Activated CD8-positive, alpha-beta T cell treated with anti-CD3 and anti-CD28 coated beads, Interleukin-2, amount 10 ng/mL, durations not matched to agents 7 days and 5 days (primary cell): ENCODE measurements at regions of chr7 and their contacts with region 1.

Region 1: GRCh38 chr7:104883718-104884452 is 130.1 kb upstream of the KMT2E start:
- DNase-seq: peak; percentile 74
- ATAC-seq: peak; percentile 88
- H3K4me3 Mint-ChIP-seq: no peak overlapping the region
- H3K27ac Mint-ChIP-seq: no peak overlapping the region
- H3K4me1 Mint-ChIP-seq: peaks cover 10% of the 10 kb centered on the region
- H3K27me3 Mint-ChIP-seq: peaks cover 6% of the 10 kb centered on the region

Region 2: GRCh38 chr7:104231054-104232046 is 652.5 kb before region 1 on chr7:
- CTCF ChIA-PET with region 1: interaction called, 12 read pairs
- POLR2A ChIA-PET with region 1: no interaction called
- DNase-seq: peak; percentile 62
- ATAC-seq: peak; percentile 82
- H3K4me3 Mint-ChIP-seq: no peak overlapping the region
- H3K27ac Mint-ChIP-seq: no peak overlapping the region
- H3K4me1 Mint-ChIP-seq: no peaks in the 10 kb centered on the region
- H3K27me3 Mint-ChIP-seq: peaks cover 20% of the 10 kb centered on the region

Region 3: GRCh38 chr7:104862719-104863118 is 21.2 kb before region 1 on chr7:
- CTCF ChIA-PET with region 1: interaction called, 22 read pairs
- POLR2A ChIA-PET with region 1: interaction called, 3 read pairs
- DNase-seq: no peak
- ATAC-seq: no peak
- H3K4me3 Mint-ChIP-seq: no peak overlapping the region
- H3K27ac Mint-ChIP-seq: no peak overlapping the region
- H3K4me1 Mint-ChIP-seq: peaks cover 10% of the 10 kb centered on the region
- H3K27me3 Mint-ChIP-seq: peaks cover 10% of the 10 kb centered on the region

Region 4: GRCh38 chr7:104900525-104901239 is 16.8 kb after region 1 on chr7:
- CTCF ChIA-PET with region 1: interaction called, 61 read pairs
- POLR2A ChIA-PET with region 1: no interaction called
- DNase-seq: no peak
- ATAC-seq: no peak
- H3K4me3 Mint-ChIP-seq: no peak overlapping the region
- H3K27ac Mint-ChIP-seq: no peak overlapping the region
- H3K4me1 Mint-ChIP-seq: peaks cover 7% of the 10 kb centered on the region
- H3K27me3 Mint-ChIP-seq: peaks cover 10% of the 10 kb centered on the region

Region 5: DNA sequence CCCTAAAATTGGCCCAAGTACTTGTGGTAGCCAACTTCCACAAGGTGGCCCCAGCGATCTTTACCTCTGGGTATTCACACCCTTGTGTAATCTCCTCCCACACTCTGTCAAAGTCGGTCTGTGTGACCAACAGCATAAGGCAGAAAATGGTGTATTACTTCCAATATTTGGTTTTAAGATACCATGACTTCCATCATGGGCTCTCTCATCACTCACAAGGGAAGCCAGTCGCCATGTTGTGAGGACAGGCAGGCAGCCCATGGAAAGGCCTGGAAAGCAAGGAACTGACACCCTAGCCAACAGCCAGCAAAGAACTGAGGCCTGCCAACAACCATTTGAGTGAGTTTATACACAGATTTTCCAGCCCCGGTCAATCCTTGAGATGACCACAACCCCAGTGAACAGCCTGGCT is 39.1 kb after region 1 on chr7:
- CTCF ChIA-PET with region 1: interaction called, 84 read pairs
- POLR2A ChIA-PET with region 1: no interaction called
- DNase-seq: peak; percentile 86
- ATAC-seq: peak; percentile 98
- H3K4me3 Mint-ChIP-seq: no peak overlapping the region
- H3K27ac Mint-ChIP-seq: peak overlapping the region; percentile 52
- H3K4me1 Mint-ChIP-seq: peaks cover 7% of the 10 kb centered on the region
- H3K27me3 Mint-ChIP-seq: peaks cover 6% of the 10 kb centered on the region